Left ventricle myocardium inferior (tissue), 1 donor: ENCODE measurements at regions of chr7 and their contacts with region 1.

Region 1: GRCh38 chr7:80392229-80393169 is 119.4 kb downstream of the GNAT3 start:
- DNase-seq: no peak
- H3K4me3 ChIP-seq: no peak overlapping the region
- H3K27ac ChIP-seq: no peak overlapping the region
- H3K4me1 ChIP-seq: no peaks in the 10 kb centered on the region
- H3K27me3 ChIP-seq: no peaks in the 10 kb centered on the region
- CTCF ChIP-seq: peak; percentile 74

Region 2: DNA sequence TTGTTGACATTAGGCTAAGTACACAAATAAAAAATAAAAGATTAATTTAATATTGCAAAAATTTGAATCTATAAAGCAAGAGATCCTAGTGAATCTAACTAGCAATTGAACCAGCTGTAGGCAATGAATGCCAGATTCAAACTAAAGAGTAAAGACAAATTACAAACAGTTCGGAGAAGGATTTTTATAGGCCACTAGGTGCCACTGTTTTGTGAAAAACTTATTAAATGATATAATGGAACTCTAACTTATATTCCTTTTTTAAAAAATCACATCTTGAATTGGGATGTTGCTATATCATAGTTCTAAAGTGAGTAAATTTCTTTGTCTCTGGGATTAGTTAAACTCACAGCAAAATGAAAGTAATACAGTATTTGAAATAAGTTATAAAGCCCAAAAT is 297.0 kb before region 1 on chr7:
- intact Hi-C with region 1: loop called (anchors 10 kb)
- DNase-seq: no peak
- H3K4me3 ChIP-seq: no peak overlapping the region
- H3K27ac ChIP-seq: no peak overlapping the region
- H3K4me1 ChIP-seq: no peaks in the 10 kb centered on the region
- H3K27me3 ChIP-seq: no peaks in the 10 kb centered on the region
- CTCF ChIP-seq: peak; percentile 64